Naive thymus-derived CD4-positive, alpha-beta T cell (primary cell): ENCODE measurements at regions of chr15 and their contacts with region 1.

Region 1: GRCh38 chr15:68550481-68551295 is 28.1 kb upstream of the CORO2B start:
- DNase-seq: peak; percentile 32 to 77 (median 55)
- ATAC-seq: peak; percentile 65
- H3K4me3 ChIP-seq: no peak overlapping the region
- H3K4me3 Mint-ChIP-seq: no peak overlapping the region
- H3K27ac ChIP-seq: no peak overlapping the region
- H3K27ac Mint-ChIP-seq: no peak overlapping the region
- H3K4me1 ChIP-seq: no peaks in the 10 kb centered on the region
- H3K4me1 Mint-ChIP-seq: peaks cover 0 to 3% (median 0%) of the 10 kb centered on the region in 7 donors
- H3K27me3 ChIP-seq: peaks cover 0 to 3% of the 10 kb centered on the region in 2 donors
- H3K27me3 Mint-ChIP-seq: peaks cover 32 to 49% (median 36%) of the 10 kb centered on the region in 5 donors

Region 2: DNA sequence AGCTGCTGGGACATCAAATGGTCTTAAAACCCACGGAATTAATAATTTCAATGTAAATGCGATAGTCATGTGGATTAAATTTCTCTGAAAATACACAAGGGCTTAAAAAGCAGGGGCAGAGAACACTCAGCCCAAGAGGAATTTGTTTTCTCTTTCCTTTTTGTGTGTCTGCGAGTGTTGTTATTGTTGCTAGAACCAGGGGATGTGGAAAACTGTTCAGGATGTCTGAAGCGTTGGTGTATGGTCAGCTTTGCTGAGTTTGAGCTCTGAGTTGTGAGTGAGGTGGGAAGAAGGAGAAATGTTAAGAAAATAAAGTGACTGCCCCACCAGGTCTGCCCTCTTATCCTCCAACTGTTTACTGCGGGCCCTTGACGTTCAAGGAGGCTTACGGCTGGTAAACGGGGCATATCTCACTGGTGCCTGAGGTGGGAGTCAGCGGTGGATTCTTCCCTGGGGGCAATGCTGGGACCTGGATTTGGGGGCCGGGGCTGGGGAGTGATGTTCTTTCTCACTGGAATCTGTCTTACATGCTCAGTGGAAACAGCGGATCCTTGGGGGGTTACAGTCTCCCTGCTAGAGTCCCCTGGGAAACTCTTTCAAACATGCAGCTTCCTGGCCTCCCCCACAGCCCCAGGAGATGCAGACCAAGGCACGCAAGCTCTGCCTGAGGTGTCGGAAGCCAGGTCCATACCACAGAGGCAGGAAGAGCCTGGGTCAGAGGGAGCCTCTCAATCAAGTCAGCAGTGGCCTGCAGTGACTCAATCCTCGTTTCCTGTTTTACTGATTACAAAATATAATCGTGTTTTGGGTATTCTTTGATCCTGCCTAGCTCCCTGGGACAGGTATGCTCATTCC is 160.5 kb before region 1 on chr15:
- CTCF ChIA-PET with region 1: no interaction called
- POLR2A ChIA-PET with region 1: no interaction called
- intact Hi-C with region 1: no loop called
- DNase-seq: no peak
- ATAC-seq: peak; percentile 44
- H3K4me3 ChIP-seq: no peak overlapping the region
- H3K4me3 Mint-ChIP-seq: peak overlapping the region in 1 of 10 donors; percentile 5
- H3K27ac ChIP-seq: no peak overlapping the region
- H3K27ac Mint-ChIP-seq: peak overlapping the region in 1 of 9 donors; percentile 53
- H3K4me1 ChIP-seq: no peaks in the 10 kb centered on the region
- H3K4me1 Mint-ChIP-seq: peaks cover 0 to 24% (median 0%) of the 10 kb centered on the region in 7 donors
- H3K27me3 ChIP-seq: peaks cover 0 to 4% of the 10 kb centered on the region in 2 donors
- H3K27me3 Mint-ChIP-seq: peaks cover 23 to 40% (median 31%) of the 10 kb centered on the region in 5 donors

Region 3: GRCh38 chr15:68536331-68537095 is 14.2 kb before region 1 on chr15:
- CTCF ChIA-PET with region 1: interaction called, 15 read pairs
- POLR2A ChIA-PET with region 1: no interaction called
- intact Hi-C with region 1: no loop called
- DNase-seq: no peak
- ATAC-seq: no peak
- H3K4me3 ChIP-seq: no peak overlapping the region
- H3K4me3 Mint-ChIP-seq: no peak overlapping the region
- H3K27ac ChIP-seq: no peak overlapping the region
- H3K27ac Mint-ChIP-seq: no peak overlapping the region
- H3K4me1 ChIP-seq: no peaks in the 10 kb centered on the region
- H3K4me1 Mint-ChIP-seq: no peaks in the 10 kb centered on the region
- H3K27me3 ChIP-seq: no peaks in the 10 kb centered on the region
- H3K27me3 Mint-ChIP-seq: peaks cover 9 to 43% (median 19%) of the 10 kb centered on the region in 5 donors

Region 4: GRCh38 chr15:68672781-68673205 is 122.1 kb after region 1 on chr15:
- CTCF ChIA-PET with region 1: interaction called, 6 read pairs
- POLR2A ChIA-PET with region 1: no interaction called
- intact Hi-C with region 1: loop called (anchors 1 to 2 kb)
- DNase-seq: no peak
- ATAC-seq: no peak
- H3K4me3 ChIP-seq: no peak overlapping the region
- H3K4me3 Mint-ChIP-seq: no peak overlapping the region
- H3K27ac ChIP-seq: no peak overlapping the region
- H3K27ac Mint-ChIP-seq: no peak overlapping the region
- H3K4me1 ChIP-seq: no peaks in the 10 kb centered on the region
- H3K4me1 Mint-ChIP-seq: peaks cover 0 to 6% (median 4%) of the 10 kb centered on the region in 7 donors
- H3K27me3 ChIP-seq: no peaks in the 10 kb centered on the region
- H3K27me3 Mint-ChIP-seq: peaks cover 6 to 17% (median 12%) of the 10 kb centered on the region in 5 donors

Region 5: DNA sequence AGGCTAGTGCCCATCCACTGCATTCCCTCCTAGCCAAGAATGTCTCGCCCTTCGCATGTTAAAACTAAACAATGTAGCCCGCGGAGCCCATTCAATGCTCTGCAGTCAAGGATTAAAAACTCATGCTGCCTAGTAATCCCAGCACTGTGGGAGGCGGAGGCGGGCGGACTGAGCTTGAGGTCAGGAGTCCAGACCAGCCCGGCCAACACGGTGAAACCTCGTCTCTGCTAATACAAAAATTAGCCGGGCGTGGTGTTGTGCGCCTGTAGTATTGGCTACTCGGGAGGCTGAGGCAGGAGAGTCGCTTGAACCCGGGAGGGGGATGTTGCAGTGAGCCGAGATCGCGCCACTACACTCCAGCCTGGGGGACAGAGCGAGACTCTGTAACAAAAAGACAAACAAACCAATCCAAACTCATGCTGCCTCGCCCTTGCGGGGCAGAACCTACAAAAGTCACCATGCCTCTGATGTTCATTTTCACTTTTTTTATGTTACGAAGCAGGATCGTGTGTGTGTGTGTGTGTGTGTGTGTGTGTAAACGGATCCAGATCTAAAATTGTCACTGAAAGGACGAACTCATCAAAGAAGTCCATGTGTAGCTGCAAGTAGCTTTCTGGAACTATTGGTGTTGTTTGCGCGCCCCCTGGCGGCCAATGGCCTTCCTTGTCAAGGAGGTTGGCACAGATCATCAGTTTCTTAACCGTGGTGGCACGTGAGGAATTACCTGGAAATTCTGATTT is 324.9 kb after region 1 on chr15:
- CTCF ChIA-PET with region 1: interaction called, 14 read pairs
- POLR2A ChIA-PET with region 1: no interaction called
- intact Hi-C with region 1: loop called in 1 of 2 experiments (anchors 1 kb)
- DNase-seq: peak; percentile 81 to 92 (median 87)
- ATAC-seq: peak; percentile 83
- H3K4me3 ChIP-seq: no peak overlapping the region
- H3K4me3 Mint-ChIP-seq: peak overlapping the region; percentile 2 to 72 (median 58)
- H3K27ac ChIP-seq: no peak overlapping the region
- H3K27ac Mint-ChIP-seq: no peak overlapping the region
- H3K4me1 ChIP-seq: peaks cover 0 to 4% of the 10 kb centered on the region in 2 donors
- H3K4me1 Mint-ChIP-seq: peaks cover 0 to 7% (median 0%) of the 10 kb centered on the region in 7 donors
- H3K27me3 ChIP-seq: no peaks in the 10 kb centered on the region
- H3K27me3 Mint-ChIP-seq: peaks cover 5 to 53% (median 22%) of the 10 kb centered on the region in 5 donors

Region 6: GRCh38 chr15:68924866-68925560 is 374.3 kb after region 1 on chr15:
- CTCF ChIA-PET with region 1: interaction called, 9 read pairs
- POLR2A ChIA-PET with region 1: no interaction called
- intact Hi-C with region 1: loop called in 1 of 2 experiments (anchors 1 kb)
- DNase-seq: peak; percentile 22 to 61 (median 50)
- ATAC-seq: peak; percentile 74
- H3K4me3 ChIP-seq: no peak overlapping the region
- H3K4me3 Mint-ChIP-seq: no peak overlapping the region
- H3K27ac ChIP-seq: no peak overlapping the region
- H3K27ac Mint-ChIP-seq: no peak overlapping the region
- H3K4me1 ChIP-seq: no peaks in the 10 kb centered on the region
- H3K4me1 Mint-ChIP-seq: peaks cover 0 to 5% (median 0%) of the 10 kb centered on the region in 7 donors
- H3K27me3 ChIP-seq: no peaks in the 10 kb centered on the region
- H3K27me3 Mint-ChIP-seq: peaks cover 17 to 36% (median 24%) of the 10 kb centered on the region in 5 donors